Transverse colon (tissue), 4 donors: ENCODE measurements at regions of chr9 and their contacts with region 1.

Region 1: DNA sequence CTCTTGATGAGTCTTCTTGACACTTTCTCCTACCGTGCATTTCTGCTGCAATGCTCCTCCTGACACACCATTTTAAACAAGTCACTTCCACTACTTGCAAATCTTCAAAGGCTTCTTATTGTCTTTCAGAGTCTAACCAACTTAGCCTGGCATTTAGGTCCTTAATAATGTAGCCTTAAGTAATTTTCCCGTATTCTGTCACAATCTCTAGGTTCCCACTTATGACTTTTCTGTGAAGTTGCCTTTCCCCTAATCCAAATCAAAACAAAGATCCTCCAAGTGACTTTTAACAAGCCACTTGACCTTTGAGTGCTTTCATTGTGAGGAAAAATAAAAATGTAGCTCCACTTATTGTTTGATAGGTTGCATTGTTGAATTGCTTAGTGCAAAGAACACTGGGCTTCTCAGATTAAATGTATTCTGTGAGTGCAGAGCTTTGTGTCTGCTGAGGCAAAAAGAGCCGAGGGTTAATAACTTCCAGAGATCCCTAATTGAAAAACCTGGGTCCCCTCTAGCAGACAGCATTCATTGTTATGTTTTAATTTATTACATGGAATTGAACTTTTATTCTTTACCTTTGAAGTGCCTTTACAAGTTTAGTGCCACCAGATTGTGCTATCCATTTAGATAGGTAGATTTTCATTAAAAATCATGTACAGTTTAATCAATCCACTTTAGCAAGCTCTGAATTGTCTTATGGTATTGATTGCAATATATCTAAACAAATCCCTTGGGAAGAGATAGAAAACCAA is 341.7 kb upstream of the TYRP1 start:
- DNase-seq: no peak
- H3K4me3 ChIP-seq: no peak overlapping the region
- H3K27ac ChIP-seq: no peak overlapping the region
- H3K4me1 ChIP-seq: no peaks in the 10 kb centered on the region
- H3K27me3 ChIP-seq: no peaks in the 10 kb centered on the region
- CTCF ChIP-seq: no peak
- EP300 ChIP-seq: no peak
- POLR2A ChIP-seq: no peak

Region 2: GRCh38 chr9:11992866-11993265 is 358.6 kb before region 1 on chr9:
- in situ Hi-C with region 1: no loop called
- intact Hi-C with region 1: loop called (anchors 2 kb)
- DNase-seq: no peak
- H3K4me3 ChIP-seq: no peak overlapping the region
- H3K27ac ChIP-seq: no peak overlapping the region
- H3K4me1 ChIP-seq: no peaks in the 10 kb centered on the region
- H3K27me3 ChIP-seq: no peaks in the 10 kb centered on the region
- CTCF ChIP-seq: no peak
- EP300 ChIP-seq: no peak
- POLR2A ChIP-seq: no peak

Region 3: DNA sequence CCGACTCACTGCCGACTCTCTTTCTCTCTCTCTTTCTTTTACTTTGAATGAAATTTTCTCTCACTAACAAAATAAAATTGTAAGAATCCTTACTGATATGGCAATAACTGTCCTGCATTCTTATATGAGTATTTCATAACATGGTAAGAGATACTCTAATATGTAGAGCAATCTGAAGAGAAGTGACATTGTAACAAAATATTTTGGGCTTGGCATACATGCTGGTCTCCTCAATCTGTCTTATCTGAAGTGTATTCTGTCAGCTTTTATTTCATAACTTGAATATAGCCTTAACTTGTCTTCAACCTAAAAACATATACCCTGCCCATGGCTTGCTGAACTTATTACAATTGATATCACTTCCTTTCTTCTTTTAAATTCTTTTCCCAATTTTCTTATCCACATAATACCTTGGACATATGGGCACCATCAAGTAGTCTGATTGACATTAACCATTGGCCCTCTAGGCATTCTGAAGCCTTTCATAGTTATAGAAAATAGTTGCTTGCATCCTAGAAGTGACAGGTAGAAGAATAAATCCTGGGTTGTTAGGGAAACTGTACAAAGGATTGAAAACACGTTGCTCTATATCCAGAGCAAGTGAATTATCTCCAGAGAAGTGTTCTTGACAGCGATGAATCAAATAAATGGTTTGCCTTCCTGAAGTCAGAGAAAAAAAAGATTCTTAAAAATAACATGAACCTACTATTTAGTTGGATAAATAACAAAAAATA is 195.9 kb before region 1 on chr9:
- in situ Hi-C with region 1: no loop called
- intact Hi-C with region 1: no loop called
- DNase-seq: no peak
- H3K4me3 ChIP-seq: no peak overlapping the region
- H3K27ac ChIP-seq: no peak overlapping the region
- H3K4me1 ChIP-seq: no peaks in the 10 kb centered on the region
- H3K27me3 ChIP-seq: no peaks in the 10 kb centered on the region
- CTCF ChIP-seq: no peak
- EP300 ChIP-seq: no peak
- POLR2A ChIP-seq: no peak

Region 4: DNA sequence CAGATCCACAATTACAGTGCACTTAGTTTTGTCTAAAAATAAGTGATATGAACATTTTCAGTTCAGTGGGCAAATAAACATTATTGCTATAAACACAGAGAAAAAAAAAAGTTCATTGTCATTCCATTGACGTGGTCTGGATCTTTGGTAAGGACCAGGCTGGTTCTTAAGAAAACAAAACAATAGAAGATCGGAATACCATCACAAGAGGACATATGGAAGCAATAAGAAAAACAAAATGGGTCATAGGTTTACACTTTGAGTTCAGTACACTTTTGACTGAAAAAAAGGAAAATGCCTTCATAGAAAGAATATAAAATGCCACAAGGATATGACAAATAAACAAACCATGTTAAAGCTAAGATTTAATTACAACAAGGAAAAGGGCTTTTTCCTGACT is 52.3 kb after region 1 on chr9:
- in situ Hi-C with region 1: no loop called
- intact Hi-C with region 1: no loop called
- DNase-seq: no peak
- H3K4me3 ChIP-seq: no peak overlapping the region
- H3K27ac ChIP-seq: no peak overlapping the region
- H3K4me1 ChIP-seq: no peaks in the 10 kb centered on the region
- H3K27me3 ChIP-seq: no peaks in the 10 kb centered on the region
- CTCF ChIP-seq: no peak
- EP300 ChIP-seq: no peak
- POLR2A ChIP-seq: no peak